ENCODE measurements at regions of chr18 and their contacts with region 1.

Region 1: DNA sequence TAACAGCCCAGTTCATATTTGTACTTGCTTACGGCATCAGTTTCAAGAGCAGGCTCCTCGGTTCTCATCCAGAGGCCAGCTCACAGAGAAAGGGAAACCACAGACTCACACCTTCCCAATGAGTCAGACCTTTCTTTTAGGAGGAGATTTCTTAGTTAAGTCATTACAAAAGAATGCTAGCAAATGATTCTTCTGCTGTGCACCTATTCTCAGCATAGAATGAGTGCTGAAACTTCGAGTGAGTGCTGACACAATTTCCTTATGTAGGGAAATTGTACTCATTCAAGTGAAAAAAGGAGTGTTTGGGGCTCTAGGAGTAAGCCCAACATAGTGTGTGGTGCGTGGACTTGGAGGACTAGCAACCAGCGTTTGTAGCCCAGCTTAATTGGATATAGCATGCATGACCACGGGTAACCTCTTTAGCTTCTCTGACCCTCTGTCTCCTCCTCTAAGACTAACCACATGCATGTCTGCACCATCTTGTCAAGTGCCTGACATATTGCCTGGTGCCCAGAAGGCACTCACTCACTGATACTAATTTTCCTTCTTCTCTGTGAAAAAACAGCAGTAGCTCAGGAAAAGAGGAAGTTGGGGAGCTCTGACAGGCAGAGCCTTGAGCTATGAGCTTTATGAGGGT is 87.0 kb downstream of the ALPK2 start:
- DNase-seq: no peak
- ATAC-seq: peak; percentile 81 to 90 (median 86)
- H3K4me3 ChIP-seq: no peak overlapping the region
- H3K27ac ChIP-seq: peak overlapping the region; percentile 83
- H3K4me1 ChIP-seq: peaks cover 62% of the 10 kb centered on the region
- H3K27me3 ChIP-seq: no peaks in the 10 kb centered on the region
- CTCF ChIP-seq: no peak

Region 2: GRCh38 chr18:58578835-58579560 is 37.1 kb after region 1 on chr18:
- intact Hi-C with region 1: loop called (anchors 5 kb)
- DNase-seq: peak in 1 of 2 donors; percentile 63
- ATAC-seq: peak; percentile 78 to 88 (median 86)
- H3K4me3 ChIP-seq: peak overlapping the region; percentile 64
- H3K27ac ChIP-seq: peak overlapping the region; percentile 92
- H3K4me1 ChIP-seq: peaks cover 26% of the 10 kb centered on the region
- H3K27me3 ChIP-seq: no peaks in the 10 kb centered on the region
- CTCF ChIP-seq: no peak

Region 3: DNA sequence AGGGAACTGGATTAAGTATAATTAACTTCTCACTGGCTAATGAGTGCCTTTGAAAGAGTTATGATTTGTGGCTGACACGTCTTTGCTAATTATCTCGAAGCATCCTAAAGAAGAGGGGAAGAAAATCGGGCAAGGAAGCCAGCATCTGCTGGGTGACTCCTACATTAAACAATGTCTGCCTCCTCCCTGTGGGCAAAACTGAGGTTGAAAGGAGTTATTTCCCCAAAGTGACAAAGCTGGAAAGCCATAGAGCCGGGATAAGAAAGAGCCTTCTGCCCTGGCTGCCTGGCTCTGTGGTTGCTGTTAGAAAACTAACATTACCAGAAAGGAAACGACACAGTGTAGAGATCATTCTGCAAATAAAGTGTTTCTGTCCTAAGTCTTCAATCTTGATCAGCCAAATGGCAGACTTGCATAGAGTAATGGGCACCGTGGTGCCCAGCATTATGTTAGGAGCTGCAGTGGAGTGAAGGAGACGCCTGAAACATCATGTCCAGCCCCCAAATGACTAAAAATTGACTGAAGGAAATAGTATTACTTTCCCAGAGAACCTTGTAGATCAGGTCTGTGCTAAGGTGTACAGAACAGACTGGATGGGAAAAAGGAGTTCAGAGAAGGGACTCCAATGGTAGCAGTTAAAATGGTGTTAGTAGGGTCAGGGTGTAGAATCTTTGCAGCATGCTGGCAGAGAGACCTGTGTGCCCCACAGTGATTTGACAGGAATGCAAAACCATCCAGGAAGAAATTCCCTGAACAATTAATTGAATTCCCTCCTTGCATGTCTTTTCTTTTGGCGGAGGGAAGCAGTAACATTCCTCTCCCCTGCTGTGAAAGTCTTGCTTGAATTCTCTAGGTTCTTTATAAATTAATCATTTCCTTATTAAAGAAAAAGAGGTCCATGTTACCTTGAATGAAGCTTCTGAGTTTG is 42.6 kb after region 1 on chr18:
- intact Hi-C with region 1: loop called (anchors 5 kb)
- DNase-seq: no peak
- ATAC-seq: no peak
- H3K4me3 ChIP-seq: no peak overlapping the region
- H3K27ac ChIP-seq: peak overlapping the region; percentile 51
- H3K4me1 ChIP-seq: peaks cover 24% of the 10 kb centered on the region
- H3K27me3 ChIP-seq: no peaks in the 10 kb centered on the region
- CTCF ChIP-seq: no peak

Region 4: DNA sequence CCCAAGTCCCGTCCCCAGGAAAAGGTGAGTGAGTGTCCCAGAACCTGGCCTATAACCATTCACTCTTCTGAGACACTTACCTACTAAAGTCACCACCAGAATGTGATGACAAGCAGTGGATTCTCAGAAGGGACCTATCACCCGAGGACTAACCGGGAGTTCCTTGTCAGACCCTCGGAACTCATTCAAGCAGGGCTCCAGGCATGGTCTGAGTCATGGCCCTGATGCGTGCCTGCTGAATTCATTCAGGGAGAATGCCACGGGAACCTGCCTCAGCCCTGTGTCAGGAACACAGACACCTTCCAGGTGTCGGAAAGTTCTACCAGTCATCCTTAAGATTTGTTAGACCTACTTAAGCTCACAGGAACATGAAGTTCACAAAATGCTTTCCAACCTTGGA is 57.2 kb after region 1 on chr18:
- intact Hi-C with region 1: loop called in 1 of 2 experiments (anchors 5 kb)
- DNase-seq: no peak
- ATAC-seq: peak in 2 of 4 donors; percentile 25 to 32
- H3K4me3 ChIP-seq: no peak overlapping the region
- H3K27ac ChIP-seq: peak overlapping the region; percentile 46
- H3K4me1 ChIP-seq: peaks cover 11% of the 10 kb centered on the region
- H3K27me3 ChIP-seq: no peaks in the 10 kb centered on the region
- CTCF ChIP-seq: no peak

Region 5: DNA sequence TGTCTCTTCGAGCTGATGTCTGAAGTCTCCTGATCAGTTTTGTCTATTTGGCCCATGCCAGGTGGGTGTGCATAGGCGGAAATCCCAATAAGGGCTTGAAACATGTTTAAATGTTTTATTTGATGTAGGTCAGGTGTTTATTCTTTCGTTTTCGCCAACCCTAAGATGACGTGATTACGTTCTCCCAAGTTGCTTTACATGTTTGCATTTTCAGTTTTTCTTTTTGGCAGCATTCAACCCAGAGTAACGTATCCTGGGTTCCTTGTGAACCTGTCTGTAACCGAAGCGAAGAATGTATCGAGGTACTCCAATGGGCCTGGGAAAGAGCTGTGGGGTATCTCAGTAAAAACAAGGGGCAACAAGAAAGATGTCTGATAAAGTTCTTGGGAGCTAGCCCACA is 83.9 kb after region 1 on chr18:
- intact Hi-C with region 1: loop called in 1 of 2 experiments (anchors 5 kb)
- DNase-seq: no peak
- ATAC-seq: no peak
- H3K4me3 ChIP-seq: peak overlapping the region; percentile 68
- H3K27ac ChIP-seq: peak overlapping the region; percentile 87
- H3K4me1 ChIP-seq: peaks cover 12% of the 10 kb centered on the region
- H3K27me3 ChIP-seq: no peaks in the 10 kb centered on the region
- CTCF ChIP-seq: no peak